ENCODE measurements at regions of chr2 and their contacts with region 1.

Region 1: DNA sequence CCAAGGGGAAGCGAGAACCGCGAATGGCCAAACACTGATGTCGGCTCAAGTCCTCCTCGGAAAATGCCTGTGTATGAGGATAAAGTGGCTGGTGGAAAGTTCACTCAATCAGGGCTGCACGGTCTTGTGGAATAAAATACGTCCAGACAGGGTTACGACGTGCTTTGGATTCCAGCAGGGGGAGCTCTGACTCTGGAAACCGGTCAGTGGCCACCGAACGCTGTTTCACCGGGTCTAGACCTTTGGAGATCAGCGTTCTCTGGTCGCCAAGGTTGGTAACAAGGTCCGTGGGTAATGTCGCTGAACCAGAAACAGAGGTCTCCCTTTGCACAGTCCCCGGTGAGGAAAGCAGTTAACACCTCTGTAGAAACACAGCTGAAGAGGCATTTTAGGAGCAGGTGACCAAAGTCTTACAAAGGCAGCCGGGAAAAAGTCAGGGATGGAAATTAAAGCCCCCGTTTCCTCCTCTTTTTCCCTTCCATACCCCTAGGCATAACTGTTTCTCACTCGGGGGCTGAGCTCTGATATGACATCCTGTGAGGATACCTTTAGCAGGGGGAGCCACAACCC is 47.8 kb downstream of the CDCA7 start:
- DNase-seq: peak; percentile 72 to 77
- ATAC-seq: peak; percentile 92 to 96
- H3K4me3 ChIP-seq: peak overlapping the region; percentile 21 to 50 (median 45)
- H3K27ac ChIP-seq: peak overlapping the region in 1 of 4 donors; percentile 35
- H3K4me1 ChIP-seq: peaks cover 12 to 13% of the 10 kb centered on the region in 2 donors
- H3K27me3 ChIP-seq: no peaks in the 10 kb centered on the region
- CTCF ChIP-seq: peak; percentile 83 to 88 (median 85)
- POLR2A ChIP-seq: no peak

Region 2: GRCh38 chr2:172977270-172978062 is 425.0 kb before region 1 on chr2:
- in situ Hi-C with region 1: no loop called
- intact Hi-C with region 1: loop called (anchors 1 kb)
- DNase-seq: peak in 1 of 2 donors; percentile 36
- ATAC-seq: peak; percentile 81 to 84
- H3K4me3 ChIP-seq: no peak overlapping the region
- H3K27ac ChIP-seq: no peak overlapping the region
- H3K4me1 ChIP-seq: peaks cover 0 to 7% of the 10 kb centered on the region in 2 donors
- H3K27me3 ChIP-seq: no peaks in the 10 kb centered on the region
- CTCF ChIP-seq: peak; percentile 26 to 62 (median 55)
- POLR2A ChIP-seq: no peak

Region 3: GRCh38 chr2:173109253-173110188 is 293.0 kb before region 1 on chr2:
- in situ Hi-C with region 1: no loop called
- intact Hi-C with region 1: no loop called
- DNase-seq: no peak
- ATAC-seq: no peak
- H3K4me3 ChIP-seq: no peak overlapping the region
- H3K27ac ChIP-seq: peak overlapping the region; percentile 41 to 75 (median 72)
- H3K4me1 ChIP-seq: peaks cover 37 to 59% of the 10 kb centered on the region in 2 donors
- H3K27me3 ChIP-seq: no peaks in the 10 kb centered on the region
- CTCF ChIP-seq: no peak
- POLR2A ChIP-seq: no peak

Region 4: DNA sequence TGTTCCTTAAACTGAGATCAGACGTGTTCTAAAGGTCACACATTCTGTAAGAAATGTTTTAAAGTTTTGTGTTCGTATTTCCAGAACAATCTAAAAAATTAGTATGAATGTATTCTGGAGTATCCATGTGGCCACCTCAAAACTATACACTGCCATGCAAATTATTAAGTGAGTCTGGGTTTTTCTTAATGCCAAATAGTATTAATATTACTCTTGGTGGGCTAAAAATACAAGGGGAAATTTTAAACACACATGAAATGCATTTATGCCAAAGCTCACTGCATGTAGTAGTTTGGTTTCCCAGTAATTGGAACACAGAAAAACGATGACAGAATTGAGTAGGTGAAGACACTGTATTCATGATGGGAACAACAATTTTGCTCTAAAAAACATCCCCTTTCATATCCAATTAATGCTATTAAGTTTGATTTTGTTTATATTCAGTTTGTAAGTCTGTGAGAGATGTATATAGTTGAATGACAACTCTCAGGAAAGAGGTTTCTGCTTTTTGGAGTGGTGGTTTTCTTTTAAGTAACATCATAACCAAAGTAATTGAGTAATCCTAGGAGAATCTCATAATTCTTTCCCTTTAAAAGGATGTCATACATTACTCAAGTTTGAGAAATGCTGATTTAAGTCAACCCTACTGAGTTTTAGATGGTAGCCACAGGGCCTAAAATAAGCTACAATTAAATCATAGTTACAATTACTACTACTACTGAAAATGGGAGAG is 123.5 kb before region 1 on chr2:
- in situ Hi-C with region 1: no loop called
- intact Hi-C with region 1: no loop called
- DNase-seq: no peak
- ATAC-seq: no peak
- H3K4me3 ChIP-seq: no peak overlapping the region
- H3K27ac ChIP-seq: no peak overlapping the region
- H3K4me1 ChIP-seq: no peaks in the 10 kb centered on the region
- H3K27me3 ChIP-seq: no peaks in the 10 kb centered on the region
- CTCF ChIP-seq: no peak
- POLR2A ChIP-seq: no peak

Region 5: GRCh38 chr2:173441222-173441621 is 38.7 kb after region 1 on chr2:
- in situ Hi-C with region 1: loop called in 2 of 4 experiments (anchors 5 kb)
- intact Hi-C with region 1: no loop called
- DNase-seq: no peak
- ATAC-seq: no peak
- H3K4me3 ChIP-seq: no peak overlapping the region
- H3K27ac ChIP-seq: no peak overlapping the region
- H3K4me1 ChIP-seq: no peaks in the 10 kb centered on the region
- H3K27me3 ChIP-seq: no peaks in the 10 kb centered on the region
- CTCF ChIP-seq: no peak
- POLR2A ChIP-seq: no peak

Region 6: DNA sequence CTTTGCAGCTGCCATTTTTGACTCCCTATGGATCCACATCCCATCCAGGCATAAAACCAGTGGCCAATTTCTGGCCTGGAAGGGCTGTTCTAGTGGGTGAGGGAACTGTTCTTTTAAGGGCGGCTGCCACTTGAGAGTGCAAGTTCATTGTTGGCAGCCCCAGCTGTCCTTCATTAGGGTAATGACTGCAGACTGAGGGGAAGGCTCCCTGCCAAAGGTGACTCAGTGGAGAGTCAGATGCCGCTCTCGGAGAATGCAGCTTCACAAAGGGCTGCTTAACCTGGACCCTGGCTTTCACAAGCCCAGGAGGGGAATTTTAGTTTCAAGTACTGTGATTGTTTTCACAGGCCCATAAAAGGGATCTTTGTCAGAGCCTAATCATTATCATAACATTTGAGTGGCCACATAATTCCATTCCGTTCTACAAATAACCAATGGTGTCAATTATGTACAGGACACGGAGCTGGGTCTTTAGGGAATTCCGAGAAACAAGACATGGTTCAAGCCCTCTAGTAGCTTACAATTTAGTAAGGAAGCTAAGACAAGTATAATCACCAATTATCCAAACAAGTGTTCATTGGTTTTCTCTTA is 187.9 kb after region 1 on chr2:
- in situ Hi-C with region 1: no loop called
- intact Hi-C with region 1: loop called (anchors 10 kb)
- DNase-seq: peak; percentile 86 to 89
- ATAC-seq: peak; percentile 91 to 98
- H3K4me3 ChIP-seq: peak overlapping the region; percentile 27 to 44 (median 40)
- H3K27ac ChIP-seq: peak overlapping the region; percentile 81 to 89 (median 88)
- H3K4me1 ChIP-seq: peaks cover 23% of the 10 kb centered on the region in 2 donors
- H3K27me3 ChIP-seq: no peaks in the 10 kb centered on the region
- CTCF ChIP-seq: no peak
- POLR2A ChIP-seq: no peak

Region 7: DNA sequence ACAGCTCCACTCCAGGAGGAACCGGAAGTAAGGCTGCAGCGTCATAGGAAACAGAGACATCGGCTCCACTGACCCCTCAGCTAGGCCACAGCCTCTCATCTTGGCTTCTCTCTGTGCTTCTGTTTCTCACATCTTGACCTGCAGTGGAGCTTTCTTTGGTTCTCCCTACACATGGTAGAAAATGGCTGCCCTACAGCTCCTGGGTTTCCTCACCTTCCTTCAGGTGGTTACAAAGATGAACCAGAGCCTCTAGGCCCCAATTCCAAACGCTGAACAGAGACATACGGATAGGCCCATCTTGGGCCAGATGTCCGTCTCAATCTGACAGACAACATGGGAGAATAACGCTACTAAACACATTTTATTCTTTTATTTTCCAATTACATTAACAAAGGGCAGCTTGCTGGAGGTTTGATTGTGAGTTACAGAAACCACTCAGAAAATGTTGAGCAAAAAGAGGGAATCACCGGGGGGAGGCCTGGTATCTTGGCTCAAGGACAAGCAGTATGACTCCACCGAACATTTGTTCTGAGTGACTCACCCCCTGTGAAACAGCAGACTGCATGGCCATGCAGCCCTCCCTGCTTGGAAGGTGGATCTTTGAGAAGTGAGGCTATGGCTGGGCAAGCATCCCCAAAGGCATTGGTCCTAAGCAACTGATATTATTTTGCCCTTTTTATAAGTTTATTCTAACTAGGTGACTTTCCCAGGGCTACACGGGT is 255.7 kb after region 1 on chr2:
- in situ Hi-C with region 1: no loop called
- intact Hi-C with region 1: no loop called
- DNase-seq: no peak
- ATAC-seq: peak in 1 of 2 donors; percentile 33
- H3K4me3 ChIP-seq: no peak overlapping the region
- H3K27ac ChIP-seq: no peak overlapping the region
- H3K4me1 ChIP-seq: no peaks in the 10 kb centered on the region
- H3K27me3 ChIP-seq: no peaks in the 10 kb centered on the region
- CTCF ChIP-seq: no peak
- POLR2A ChIP-seq: no peak

Region 8: GRCh38 chr2:173834141-173834540 is 431.7 kb after region 1 on chr2:
- in situ Hi-C with region 1: no loop called
- intact Hi-C with region 1: no loop called
- DNase-seq: no peak
- ATAC-seq: no peak
- H3K4me3 ChIP-seq: no peak overlapping the region
- H3K27ac ChIP-seq: no peak overlapping the region
- H3K4me1 ChIP-seq: no peaks in the 10 kb centered on the region
- H3K27me3 ChIP-seq: no peaks in the 10 kb centered on the region
- CTCF ChIP-seq: no peak
- POLR2A ChIP-seq: no peak

Region 9: GRCh38 chr2:173874894-173875237 is 472.4 kb after region 1 on chr2:
- in situ Hi-C with region 1: loop called in 1 of 4 experiments (anchors 25 kb)
- intact Hi-C with region 1: no loop called
- DNase-seq: no peak
- ATAC-seq: no peak
- H3K4me3 ChIP-seq: no peak overlapping the region
- H3K27ac ChIP-seq: no peak overlapping the region
- H3K4me1 ChIP-seq: no peaks in the 10 kb centered on the region
- H3K27me3 ChIP-seq: no peaks in the 10 kb centered on the region
- CTCF ChIP-seq: no peak
- POLR2A ChIP-seq: no peak

Region 10: DNA sequence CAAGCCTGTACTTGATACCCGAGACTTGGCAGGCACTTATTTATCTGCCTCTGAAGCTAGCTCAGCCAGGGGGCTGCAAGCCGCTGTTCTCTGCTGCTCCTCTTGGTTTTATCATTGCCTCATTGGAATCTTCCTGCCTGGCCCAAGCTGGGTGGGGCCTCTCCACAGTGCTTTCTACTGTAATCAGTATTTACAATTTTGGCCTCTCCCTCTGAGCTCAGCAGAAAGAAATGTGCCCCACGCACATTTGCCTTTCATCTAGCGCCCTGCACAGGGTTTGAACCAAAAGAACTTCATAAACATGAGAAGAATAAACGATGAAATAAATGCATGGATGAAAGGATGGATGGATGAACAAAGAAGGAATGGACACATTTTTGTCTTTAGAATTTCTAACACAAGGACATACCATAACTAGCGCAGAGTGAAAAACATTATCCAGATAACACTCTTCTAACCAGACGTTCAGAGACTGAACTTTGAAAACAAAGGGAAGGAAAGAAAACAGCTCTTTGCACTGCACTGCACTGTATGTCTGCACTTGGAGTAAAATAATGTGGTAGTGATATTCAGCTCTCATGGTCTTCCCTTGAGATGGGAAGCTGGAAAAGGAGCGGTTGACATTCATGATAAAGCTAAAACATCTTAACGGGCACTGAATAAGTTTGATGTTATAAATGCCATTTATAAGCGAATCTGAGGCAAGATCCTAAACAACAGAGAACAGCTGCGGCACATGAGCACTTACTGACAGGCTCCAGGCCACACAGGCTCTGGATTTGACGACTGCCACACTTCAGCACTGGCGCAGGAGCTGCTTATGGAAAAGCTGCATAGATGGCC is 649.5 kb after region 1 on chr2:
- in situ Hi-C with region 1: loop called in 3 of 4 experiments (anchors 25 kb)
- intact Hi-C with region 1: no loop called
- DNase-seq: no peak
- ATAC-seq: no peak
- H3K4me3 ChIP-seq: no peak overlapping the region
- H3K27ac ChIP-seq: no peak overlapping the region
- H3K4me1 ChIP-seq: no peaks in the 10 kb centered on the region
- H3K27me3 ChIP-seq: no peaks in the 10 kb centered on the region
- CTCF ChIP-seq: no peak
- POLR2A ChIP-seq: no peak

Measured in gastrocnemius medialis (tissue), 4 donors.